Cardiac septum (tissue), 1 donor: ENCODE measurements at regions of chr20 and their contacts with region 1.

Region 1: GRCh38 chr20:2651772-2652723 is at the start of gene NOP56:
- DNase-seq: peak; percentile 96
- total RNA-seq, gene NOP56: 62.2 TPM

Region 2: GRCh38 chr20:1663917-1664316 is 988.1 kb before region 1 on chr20:
- intact Hi-C with region 1: no loop called
- DNase-seq: no peak

Region 3: DNA sequence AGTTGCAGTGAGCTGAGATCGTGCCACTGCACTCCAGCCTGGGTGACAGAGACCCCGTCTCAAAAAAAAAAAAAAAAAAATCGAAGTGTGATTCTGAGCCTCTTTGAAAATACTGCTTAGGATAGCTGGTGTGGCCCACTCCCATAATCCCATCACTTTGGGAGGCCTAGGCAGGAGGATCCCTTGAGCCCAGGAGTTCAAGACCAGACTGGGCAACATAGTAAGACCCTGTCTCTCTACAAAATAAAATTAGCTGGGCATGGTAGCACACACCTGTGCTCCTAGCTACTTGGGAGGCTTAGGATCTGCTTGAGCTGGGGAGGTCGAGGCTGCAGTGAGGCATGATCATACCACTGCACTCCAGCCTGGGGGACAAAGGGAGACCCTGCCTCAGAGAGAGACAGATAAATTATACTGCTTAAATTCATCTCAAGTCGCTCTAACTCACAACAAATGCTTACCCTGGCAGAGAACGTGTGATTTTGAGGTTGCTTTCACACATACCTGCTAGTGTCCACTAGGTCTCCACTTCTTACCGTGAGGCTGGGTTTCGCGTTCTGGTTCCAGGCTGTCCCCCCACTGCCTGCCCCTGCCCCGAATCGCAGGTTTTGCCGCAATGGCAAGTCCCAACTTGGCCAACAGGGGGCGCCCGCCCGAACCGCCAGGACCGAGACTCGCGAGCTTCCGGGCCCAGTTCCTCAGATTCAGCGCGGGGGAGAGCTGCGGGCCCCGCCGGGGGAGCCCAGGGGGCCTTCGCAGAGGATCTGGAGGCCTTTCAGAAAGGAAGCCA is 127.9 kb before region 1 on chr20:
- intact Hi-C with region 1: loop called (anchors 5 kb)
- DNase-seq: peak; percentile 96

Region 4: DNA sequence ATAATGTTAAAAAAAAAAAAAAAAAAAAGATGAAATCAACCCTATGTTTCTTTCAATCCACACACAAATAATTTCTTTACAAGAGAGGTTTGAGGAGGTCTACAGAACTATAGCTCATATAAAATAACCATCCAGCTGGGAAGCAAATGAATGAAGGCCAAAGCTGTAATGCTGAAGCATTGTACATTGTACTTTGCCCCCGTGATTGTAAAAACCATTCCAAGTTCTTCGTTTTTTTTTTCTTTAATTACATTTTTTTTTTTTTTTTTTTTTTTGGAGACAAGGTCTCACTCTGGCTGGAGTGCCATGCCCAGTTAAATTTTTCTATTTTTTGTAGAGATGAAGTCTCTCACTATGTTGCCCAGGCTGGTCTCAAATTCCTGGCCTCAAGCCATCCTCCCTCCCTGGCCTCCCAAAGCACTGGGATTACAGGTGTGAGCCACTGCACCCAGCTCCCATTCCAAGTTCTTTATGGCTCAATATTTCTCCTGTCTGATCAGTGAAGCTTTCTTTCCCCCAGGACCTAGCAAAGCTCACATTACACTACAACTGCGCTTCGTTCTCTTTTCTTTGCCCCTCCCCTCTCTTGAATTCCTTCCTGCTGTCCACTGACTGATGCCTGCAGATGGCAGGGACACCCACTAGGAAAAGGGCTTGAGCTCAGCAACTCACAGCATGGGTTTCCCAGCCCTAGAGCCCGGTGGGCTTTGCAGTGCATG is 52.6 kb before region 1 on chr20:
- intact Hi-C with region 1: no loop called
- DNase-seq: no peak

Region 5: DNA sequence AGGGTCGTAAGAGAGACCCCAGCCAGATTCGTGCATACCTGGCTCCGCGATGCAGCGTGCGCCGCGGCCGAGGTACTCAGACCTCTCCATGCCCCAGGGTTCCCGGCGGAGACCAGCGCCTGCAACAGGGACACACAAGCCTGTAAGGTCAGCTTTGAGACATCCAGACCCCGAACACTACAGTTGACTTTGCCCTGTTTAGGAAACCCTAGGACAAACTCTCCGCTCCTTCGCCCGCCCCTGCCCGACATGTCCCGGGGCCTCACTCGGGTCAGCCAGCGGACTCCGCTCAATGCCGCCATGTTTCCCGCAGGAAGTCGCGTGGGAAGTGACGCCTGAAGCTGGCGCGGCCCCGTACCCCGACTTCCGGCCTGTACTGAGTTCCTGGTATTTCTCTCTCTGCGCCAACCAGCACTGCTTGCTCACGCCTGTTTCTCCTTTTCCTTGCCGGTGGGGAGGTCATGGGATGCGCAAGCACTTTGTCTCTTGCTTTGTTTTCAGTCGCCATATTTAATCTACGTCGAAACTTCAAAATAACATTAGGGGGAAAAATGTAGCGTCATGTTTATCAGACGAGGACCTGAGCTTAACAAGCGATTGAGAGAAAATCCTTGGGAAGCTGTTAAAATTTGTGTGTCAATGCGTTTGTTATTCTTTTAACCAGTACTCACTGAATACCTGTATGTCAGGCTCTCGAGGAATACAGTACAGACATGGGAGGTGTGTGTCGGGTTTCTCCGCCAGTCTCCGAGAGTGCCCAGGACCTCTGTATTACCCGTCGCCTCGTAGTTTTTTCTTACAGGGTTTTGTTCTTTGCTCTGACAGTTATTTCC is 12.1 kb after region 1 on chr20 and contains the start of gene IDH3B:
- intact Hi-C with region 1: loop called (anchors 1 kb)
- DNase-seq: peak; percentile 97
- total RNA-seq, gene IDH3B: 121 TPM

Region 6: DNA sequence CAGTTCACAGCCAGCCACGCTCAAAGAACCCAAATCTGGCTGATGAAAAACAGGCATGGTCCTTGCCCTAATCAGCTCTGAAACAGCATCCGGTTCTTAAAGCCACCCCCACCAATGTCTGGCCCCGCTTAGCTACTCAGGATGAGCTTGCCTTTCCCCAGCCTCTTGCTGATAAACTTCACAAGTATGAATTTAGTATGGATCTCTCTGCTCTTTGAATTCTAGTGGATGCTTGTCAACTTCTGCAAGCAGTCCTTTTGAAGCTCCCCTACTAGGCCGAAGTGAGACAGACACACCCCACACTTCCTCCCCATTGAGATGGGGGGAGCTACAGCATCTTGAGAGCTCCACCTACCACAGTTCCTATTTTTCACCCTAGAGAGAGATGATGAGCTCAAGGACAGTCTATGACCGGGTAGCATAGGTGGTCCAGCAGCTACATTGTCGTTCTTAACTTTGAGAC is 77.2 kb after region 1 on chr20:
- intact Hi-C with region 1: no loop called
- DNase-seq: no peak